ENCODE measurements at regions of chr12 and their contacts with region 1.

Region 1: GRCh38 chr12:8078398-8078797 is 3.7 kb upstream of the NECAP1 start:
- DNase-seq: peak; percentile 58
- H3K4me3 Mint-ChIP-seq: no peak overlapping the region
- H3K27ac Mint-ChIP-seq: no peak overlapping the region
- H3K4me1 Mint-ChIP-seq: peaks cover 17% of the 10 kb centered on the region
- H3K27me3 Mint-ChIP-seq: no peaks in the 10 kb centered on the region
- CTCF ChIP-seq: no peak

Region 2: DNA sequence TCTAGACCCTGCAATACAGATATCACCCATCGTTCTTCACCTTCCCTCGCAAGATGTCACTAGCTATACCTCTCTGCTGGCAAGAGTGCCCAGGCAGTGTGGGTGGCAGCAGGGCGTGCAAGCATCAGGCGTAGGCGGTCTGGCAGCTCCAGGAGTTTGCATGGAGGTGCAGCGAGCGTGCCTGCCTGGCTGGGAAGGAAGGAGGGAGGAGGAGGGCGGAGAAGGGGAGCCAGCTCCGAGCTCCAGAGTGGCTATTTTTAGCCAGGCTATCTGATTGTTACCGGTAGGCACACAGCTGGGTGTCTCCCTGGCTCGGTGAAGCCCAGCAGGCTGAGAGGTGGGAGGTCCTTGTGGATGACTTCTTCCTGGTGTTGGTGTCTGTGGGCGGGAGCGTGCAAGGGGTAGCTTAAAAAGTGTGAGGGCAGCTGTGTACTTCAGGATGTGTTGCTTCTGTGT is 39.7 kb before region 1 on chr12:
- CTCF ChIA-PET with region 1: no interaction called
- intact Hi-C with region 1: loop called (anchors 5 kb)
- DNase-seq: peak; percentile 37
- H3K4me3 Mint-ChIP-seq: peak overlapping the region; percentile 35
- H3K27ac Mint-ChIP-seq: no peak overlapping the region
- H3K4me1 Mint-ChIP-seq: peaks cover 55% of the 10 kb centered on the region
- H3K27me3 Mint-ChIP-seq: no peaks in the 10 kb centered on the region
- CTCF ChIP-seq: no peak

Region 3: GRCh38 chr12:8045952-8046944 is 32.1 kb before region 1 on chr12:
- CTCF ChIA-PET with region 1: interaction called, 3 read pairs
- intact Hi-C with region 1: loop called (anchors 1 kb)
- DNase-seq: peak; percentile 81
- H3K4me3 Mint-ChIP-seq: no peak overlapping the region
- H3K27ac Mint-ChIP-seq: no peak overlapping the region
- H3K4me1 Mint-ChIP-seq: no peaks in the 10 kb centered on the region
- H3K27me3 Mint-ChIP-seq: no peaks in the 10 kb centered on the region
- CTCF ChIP-seq: peak; percentile 43

Region 4: DNA sequence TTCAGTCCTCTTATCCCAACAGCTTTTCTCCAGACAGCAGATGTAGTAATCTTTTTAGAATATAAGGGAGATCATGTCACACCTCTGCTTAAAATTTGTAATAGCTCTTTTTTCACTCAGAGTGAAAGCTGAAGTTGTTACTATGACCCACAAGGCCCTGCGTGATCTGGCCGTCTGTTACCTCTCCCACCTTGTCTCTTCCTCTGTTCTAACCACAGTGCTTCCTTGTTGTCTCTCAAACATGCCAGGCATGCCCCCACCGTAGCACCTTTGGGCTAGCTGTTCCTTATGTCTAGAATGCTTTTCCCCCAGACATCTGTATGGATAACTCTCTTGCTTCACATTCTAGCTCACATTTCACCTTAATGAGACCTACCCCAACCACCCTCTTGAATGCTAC is 10.2 kb after region 1 on chr12:
- CTCF ChIA-PET with region 1: no interaction called
- intact Hi-C with region 1: no loop called
- DNase-seq: no peak
- H3K4me3 Mint-ChIP-seq: no peak overlapping the region
- H3K27ac Mint-ChIP-seq: no peak overlapping the region
- H3K4me1 Mint-ChIP-seq: peaks cover 11% of the 10 kb centered on the region
- H3K27me3 Mint-ChIP-seq: no peaks in the 10 kb centered on the region
- CTCF ChIP-seq: no peak